CD4-positive, alpha-beta T cell (primary cell): ENCODE measurements at regions of chr17 and their contacts with region 1.

Region 1: GRCh38 chr17:15502369-15503112 is 35.1 kb upstream of the CDRT4 start:
- DNase-seq: peak; percentile 21 to 75 (median 50)
- ATAC-seq: peak; percentile 66
- H3K4me3 ChIP-seq: no peak overlapping the region
- H3K4me3 Mint-ChIP-seq: no peak overlapping the region
- H3K27ac ChIP-seq: no peak overlapping the region
- H3K27ac Mint-ChIP-seq: no peak overlapping the region
- H3K4me1 ChIP-seq: peaks cover 10% of the 10 kb centered on the region
- H3K4me1 Mint-ChIP-seq: peaks cover 6% of the 10 kb centered on the region
- H3K27me3 ChIP-seq: no peaks in the 10 kb centered on the region
- H3K27me3 Mint-ChIP-seq: no peaks in the 10 kb centered on the region
- CTCF ChIP-seq: peak; percentile 57

Region 2: GRCh38 chr17:15257258-15257788 is 245.2 kb before region 1 on chr17:
- CTCF ChIA-PET with region 1: interaction called, 3 read pairs
- POLR2A ChIA-PET with region 1: no interaction called
- intact Hi-C with region 1: loop called (anchors 1 to 2 kb)
- DNase-seq: peak; percentile 20 to 75 (median 34)
- ATAC-seq: no peak
- H3K4me3 ChIP-seq: no peak overlapping the region
- H3K4me3 Mint-ChIP-seq: no peak overlapping the region
- H3K27ac ChIP-seq: no peak overlapping the region
- H3K27ac Mint-ChIP-seq: no peak overlapping the region
- H3K4me1 ChIP-seq: peaks cover 21% of the 10 kb centered on the region
- H3K4me1 Mint-ChIP-seq: peaks cover 16% of the 10 kb centered on the region
- H3K27me3 ChIP-seq: peaks cover 28 to 44% of the 10 kb centered on the region in 2 experiments
- H3K27me3 Mint-ChIP-seq: peaks cover 76% of the 10 kb centered on the region
- CTCF ChIP-seq: peak; percentile 84

Region 3: GRCh38 chr17:15444805-15445204 is 57.7 kb before region 1 on chr17:
- CTCF ChIA-PET with region 1: no interaction called
- POLR2A ChIA-PET with region 1: no interaction called
- intact Hi-C with region 1: no loop called
- DNase-seq: peak in 2 of 14 experiments; percentile 3 to 13
- ATAC-seq: no peak
- H3K4me3 ChIP-seq: no peak overlapping the region
- H3K4me3 Mint-ChIP-seq: no peak overlapping the region
- H3K27ac ChIP-seq: no peak overlapping the region
- H3K27ac Mint-ChIP-seq: no peak overlapping the region
- H3K4me1 ChIP-seq: peaks cover 8% of the 10 kb centered on the region
- H3K4me1 Mint-ChIP-seq: peaks cover 24% of the 10 kb centered on the region
- H3K27me3 ChIP-seq: no peaks in the 10 kb centered on the region
- H3K27me3 Mint-ChIP-seq: no peaks in the 10 kb centered on the region
- CTCF ChIP-seq: no peak